Activated CD8-positive, alpha-beta T cell treated with anti-CD3 and anti-CD28 coated beads, Interleukin-2, amount 10 ng/mL, durations not matched to agents 7 days and 5 days (primary cell): ENCODE measurements at regions of chr1 and their contacts with region 1.

Region 1: DNA sequence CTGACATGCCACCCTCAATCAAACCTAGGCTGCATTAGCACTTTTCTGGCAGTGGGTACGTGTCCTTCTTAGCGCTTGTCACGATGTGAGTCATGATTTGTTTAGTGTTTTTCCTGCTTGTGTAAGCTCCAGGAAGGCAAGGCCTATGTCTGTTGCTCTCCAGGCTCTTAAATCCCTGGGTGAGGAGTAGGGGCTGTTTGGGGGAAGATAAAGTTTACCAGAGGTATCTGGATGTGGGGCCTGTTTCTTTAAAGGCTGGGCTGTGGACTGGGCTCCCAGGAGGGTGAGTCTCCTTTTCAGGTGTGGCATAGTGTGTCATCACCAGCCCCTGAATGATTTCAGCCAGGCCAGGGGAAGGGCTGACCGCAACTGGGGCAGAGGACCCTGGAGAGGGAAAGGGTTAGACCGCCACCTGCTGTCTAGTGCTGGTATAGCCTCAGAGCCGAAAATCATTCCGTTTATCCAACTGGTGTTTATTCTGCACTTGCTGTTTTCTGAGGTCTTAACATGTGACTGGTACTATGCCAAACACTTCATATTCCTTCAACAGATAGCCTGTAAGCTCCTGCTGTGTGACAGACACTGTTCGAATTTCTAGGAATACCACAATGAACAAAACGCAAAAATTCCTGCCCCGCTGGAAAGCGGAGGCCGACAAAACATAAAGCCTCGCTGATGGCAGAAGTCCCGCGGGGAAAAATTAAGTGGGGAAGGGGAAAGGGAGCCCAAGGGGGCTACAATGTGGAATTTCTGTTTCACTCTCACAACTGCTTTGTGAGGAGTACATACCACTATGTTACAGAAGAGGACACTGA is 9.7 kb downstream of the SERINC2 start:
- DNase-seq: peak; percentile 76
- ATAC-seq: peak; percentile 54
- H3K4me3 Mint-ChIP-seq: no peak overlapping the region
- H3K27ac Mint-ChIP-seq: no peak overlapping the region
- H3K4me1 Mint-ChIP-seq: peaks cover 18% of the 10 kb centered on the region
- H3K27me3 Mint-ChIP-seq: peaks cover 17% of the 10 kb centered on the region

Region 2: DNA sequence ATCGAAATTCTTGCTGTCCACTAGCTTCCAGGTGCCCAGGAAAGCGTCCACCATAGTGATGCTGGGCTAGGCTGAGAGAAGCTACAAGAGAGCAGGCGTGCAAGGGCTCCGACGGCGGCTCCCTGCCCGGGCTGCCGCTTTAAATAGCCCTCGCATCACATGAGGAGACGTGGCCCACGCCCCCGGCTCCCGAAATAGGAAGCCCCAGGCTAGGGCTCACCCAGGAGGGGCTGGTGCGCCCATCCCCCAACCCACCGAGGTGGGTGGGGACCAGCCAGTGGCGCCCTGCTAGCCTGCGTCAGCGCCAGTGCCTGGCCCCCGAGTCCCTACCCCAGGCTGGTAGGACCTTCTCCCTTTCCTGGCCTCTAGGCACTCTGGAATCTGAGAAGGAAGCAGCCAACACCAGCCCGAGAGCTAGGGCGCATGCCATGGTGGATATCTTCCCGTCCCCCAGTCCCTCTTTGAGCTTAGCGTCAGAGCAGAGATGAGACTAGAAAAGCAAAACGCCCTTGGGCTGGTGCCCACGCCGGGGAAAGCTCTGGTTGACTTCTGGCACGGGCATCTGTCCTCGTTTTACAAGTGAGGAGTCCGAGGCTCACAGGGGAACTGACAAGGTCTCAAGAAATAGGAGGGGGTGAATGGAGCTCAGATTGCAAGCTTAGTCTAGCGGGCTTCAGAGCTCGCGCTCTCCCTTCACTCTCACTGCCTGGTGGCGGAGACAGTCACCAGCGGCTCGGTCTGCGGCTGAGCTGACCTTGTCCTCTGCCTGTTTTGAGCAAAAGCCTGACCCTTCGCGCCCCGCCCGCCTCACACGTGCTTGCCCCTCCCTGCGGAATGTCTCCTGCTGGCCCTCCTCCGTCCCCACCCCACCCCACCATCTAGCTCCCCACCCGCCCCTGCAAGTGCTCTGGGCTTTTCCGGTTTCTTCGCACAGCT is 49.5 kb before region 1 on chr1 and contains the start of gene FABP3:
- CTCF ChIA-PET with region 1: interaction called, 10 read pairs
- POLR2A ChIA-PET with region 1: no interaction called
- DNase-seq: peak; percentile 46
- ATAC-seq: peak; percentile 74
- H3K4me3 Mint-ChIP-seq: peak within 1 kb of the TSS; percentile 67
- H3K27ac Mint-ChIP-seq: peak within 1 kb of the TSS; percentile 13
- H3K4me1 Mint-ChIP-seq: peaks cover 20% of the 10 kb centered on the region
- H3K27me3 Mint-ChIP-seq: peaks cover 4% of the 10 kb centered on the region
- total RNA-seq, gene FABP3: not detected

Region 3: DNA sequence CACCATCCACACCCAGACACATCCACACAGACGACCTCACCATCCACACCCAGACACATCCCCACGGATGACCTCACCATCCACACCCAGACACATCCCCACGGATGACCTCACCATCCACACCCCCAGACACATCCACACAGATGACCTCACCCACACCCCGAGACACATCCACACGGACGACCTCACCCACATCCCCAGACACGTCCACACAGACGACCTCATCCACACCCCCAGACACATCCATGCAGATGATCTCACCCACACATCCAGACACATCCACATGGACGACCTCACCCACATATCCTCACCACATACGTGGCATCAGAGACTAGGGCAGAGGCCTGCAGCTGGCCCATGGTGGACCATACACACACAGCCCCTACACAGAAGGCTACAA is 35.1 kb before region 1 on chr1:
- CTCF ChIA-PET with region 1: no interaction called
- POLR2A ChIA-PET with region 1: no interaction called
- DNase-seq: no peak
- ATAC-seq: no peak
- H3K4me3 Mint-ChIP-seq: no peak overlapping the region
- H3K27ac Mint-ChIP-seq: no peak overlapping the region
- H3K4me1 Mint-ChIP-seq: no peaks in the 10 kb centered on the region
- H3K27me3 Mint-ChIP-seq: peaks cover 6% of the 10 kb centered on the region